ENCODE measurements at regions of chr10 and their contacts with region 1.

Region 1: GRCh38 chr10:14200698-14201544 is 129.8 kb downstream of the FRMD4A start:
- DNase-seq: peak; percentile 29
- H3K4me3 Mint-ChIP-seq: no peak overlapping the region
- H3K27ac Mint-ChIP-seq: no peak overlapping the region
- H3K4me1 Mint-ChIP-seq: no peaks in the 10 kb centered on the region
- H3K27me3 Mint-ChIP-seq: peaks cover 28% of the 10 kb centered on the region

Region 2: DNA sequence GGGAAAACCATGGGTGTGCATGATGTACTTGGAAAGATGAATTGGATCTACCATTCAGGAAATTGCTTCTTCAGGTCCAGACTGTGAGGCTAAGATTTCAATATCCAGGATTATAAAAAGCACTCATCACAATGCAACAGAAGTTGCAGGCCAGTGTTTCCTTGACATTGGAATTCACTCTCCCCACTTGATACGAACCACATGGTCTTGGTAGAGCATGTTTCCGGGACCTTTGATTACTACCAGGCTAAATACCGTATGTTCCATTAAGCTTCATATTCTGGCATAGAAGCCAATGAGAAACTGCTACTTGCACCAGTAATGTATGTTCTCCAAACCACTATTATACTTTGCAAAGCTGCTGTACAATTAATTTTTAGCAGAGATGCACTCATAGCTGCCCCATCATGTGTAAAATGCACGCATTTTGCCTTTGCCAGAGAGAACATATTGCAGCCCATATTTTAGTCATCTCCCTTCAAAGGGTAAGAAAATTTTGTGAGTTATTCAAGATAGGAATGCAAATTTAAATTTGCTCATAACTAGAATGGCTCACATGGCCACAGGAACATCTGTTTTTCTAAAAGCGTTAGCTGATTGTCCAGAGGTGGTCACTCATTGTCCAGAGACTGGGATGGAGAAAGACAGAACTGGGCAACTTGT is 121.7 kb after region 1 on chr10:
- CTCF ChIA-PET with region 1: interaction called, 11 read pairs
- POLR2A ChIA-PET with region 1: no interaction called
- intact Hi-C with region 1: no loop called
- DNase-seq: no peak
- H3K4me3 Mint-ChIP-seq: no peak overlapping the region
- H3K27ac Mint-ChIP-seq: no peak overlapping the region
- H3K4me1 Mint-ChIP-seq: peaks cover under 1% of the 10 kb centered on the region
- H3K27me3 Mint-ChIP-seq: peaks cover 20% of the 10 kb centered on the region

Region 3: GRCh38 chr10:14478604-14479003 is 277.7 kb after region 1 on chr10:
- CTCF ChIA-PET with region 1: interaction called, 28 read pairs
- POLR2A ChIA-PET with region 1: no interaction called
- intact Hi-C with region 1: loop called (anchors 1 kb)
- DNase-seq: peak; percentile 36
- H3K4me3 Mint-ChIP-seq: no peak overlapping the region
- H3K27ac Mint-ChIP-seq: no peak overlapping the region
- H3K4me1 Mint-ChIP-seq: no peaks in the 10 kb centered on the region
- H3K27me3 Mint-ChIP-seq: peaks cover 6% of the 10 kb centered on the region